ENCODE measurements at regions of chr11 and their contacts with region 1.

Region 1: DNA sequence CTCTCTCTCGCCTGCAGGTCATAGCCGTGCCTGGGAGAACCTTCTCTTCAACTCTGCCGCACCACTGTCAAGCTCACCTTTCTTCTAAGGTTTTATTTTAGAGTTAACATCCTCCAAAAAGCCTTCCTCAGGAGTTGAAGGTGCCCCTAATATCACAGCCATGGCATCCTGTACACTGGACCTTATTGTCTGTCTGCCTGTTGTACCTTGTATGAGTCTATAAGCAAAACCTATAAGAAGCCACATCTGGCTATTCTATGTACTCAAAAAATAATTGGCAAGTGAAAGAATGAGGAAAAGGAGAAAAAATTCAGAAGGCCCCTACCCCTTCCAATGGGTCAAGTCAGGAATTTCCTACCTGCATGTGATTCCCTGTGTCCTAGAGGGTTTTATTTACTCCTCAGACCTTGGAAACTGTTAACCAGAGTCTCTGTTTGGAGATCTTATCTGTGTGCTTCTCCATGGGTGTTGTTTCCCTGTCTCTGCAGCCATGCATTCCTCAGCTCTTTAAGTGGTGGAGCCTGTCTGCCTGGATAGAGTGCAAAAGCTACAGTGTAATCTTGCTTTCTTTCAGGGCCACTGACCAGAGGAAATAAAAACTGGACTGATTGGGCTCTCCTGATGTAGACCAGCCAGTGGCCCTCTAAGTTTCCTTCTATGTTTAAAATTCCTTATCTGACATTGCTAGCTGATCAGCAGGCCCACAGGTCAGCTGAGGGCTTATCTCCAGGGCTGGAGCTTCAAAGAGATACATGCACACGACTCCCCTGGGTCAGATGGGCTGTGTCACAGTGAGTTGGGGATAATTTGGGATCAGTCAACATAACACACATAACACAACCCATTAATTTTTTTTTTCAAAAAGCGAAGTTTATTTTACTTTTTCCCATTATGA is 37.6 kb upstream of the TMEM135 start:
- DNase-seq: peak; percentile 99
- ATAC-seq: peak; percentile 92
- H3K4me3 ChIP-seq: peak overlapping the region; percentile 31 to 48 (median 34)
- H3K27ac ChIP-seq: peak overlapping the region; percentile 87
- H3K4me1 ChIP-seq: peaks cover 91% of the 10 kb centered on the region
- H3K27me3 ChIP-seq: no peaks in the 10 kb centered on the region
- CTCF ChIP-seq: no peak
- EP300 ChIP-seq: peak; percentile 47 to 80; a peak in 2 of 4 replicates
- POLR2A ChIP-seq: peak in 1 of 2 experiments; percentile 42; a peak in 1 of 4 replicates
- RAD21 ChIP-seq: no peak

Region 2: GRCh38 chr11:86955361-86956120 is 44.6 kb before region 1 on chr11 and contains the start of gene FZD4:
- CTCF ChIA-PET with region 1: no interaction called
- POLR2A ChIA-PET with region 1: interaction called, 30 read pairs
- in situ Hi-C with region 1: loop called (anchors 5 kb)
- intact Hi-C with region 1: loop called (anchors 1 kb)
- DNase-seq: peak; percentile 88
- ATAC-seq: peak; percentile 92
- H3K4me3 ChIP-seq: peak within 1 kb of the TSS; percentile 79 to 87 (median 82)
- H3K27ac ChIP-seq: peak within 1 kb of the TSS; percentile 96
- H3K4me1 ChIP-seq: peaks cover 50% of the 10 kb centered on the region
- H3K27me3 ChIP-seq: no peaks in the 10 kb centered on the region; a peak in 1 of 5 replicates
- CTCF ChIP-seq: peak; percentile 71
- EP300 ChIP-seq: peak in 1 of 2 experiments; percentile 23; a peak in 1 of 4 replicates
- POLR2A ChIP-seq: peak; percentile 67 to 68
- RAD21 ChIP-seq: peak; percentile 78; the same call in 1 of the 2 replicates
- total RNA-seq, gene FZD4: 34.7 and 46.5 TPM in 2 replicates

Region 3: DNA sequence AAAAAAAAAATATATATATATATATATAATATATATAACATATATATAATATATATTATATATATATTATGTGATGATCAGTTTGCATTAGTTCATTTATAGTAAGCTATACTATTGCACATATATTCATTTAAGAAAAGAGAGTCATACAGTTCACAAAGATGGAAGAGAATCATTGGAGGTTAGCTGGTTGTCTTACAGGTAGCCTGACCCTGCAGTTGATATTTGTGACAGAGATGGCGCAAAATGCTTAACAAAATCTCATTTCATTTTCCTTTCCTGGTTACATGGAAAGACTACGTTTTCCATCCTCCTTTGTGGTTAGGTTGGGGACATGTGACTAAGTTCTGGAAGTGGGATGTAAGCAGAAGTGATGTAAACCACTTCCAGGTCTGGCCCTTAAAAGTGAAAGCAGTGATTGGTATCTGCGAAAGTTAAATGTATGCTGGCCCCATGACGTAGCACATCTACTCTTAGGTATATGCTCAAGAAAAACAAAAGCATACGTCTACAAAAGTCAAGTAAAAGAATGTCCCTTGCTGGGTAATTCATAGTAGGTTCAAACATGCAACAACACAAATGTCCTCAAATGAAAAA is 30.4 kb after region 1 on chr11:
- CTCF ChIA-PET with region 1: no interaction called
- POLR2A ChIA-PET with region 1: interaction called, 47 read pairs
- in situ Hi-C with region 1: loop called (anchors 5 kb)
- intact Hi-C with region 1: loop called (anchors 1 kb)
- DNase-seq: peak; percentile 29
- ATAC-seq: no peak
- H3K4me3 ChIP-seq: no peak overlapping the region
- H3K27ac ChIP-seq: no peak overlapping the region
- H3K4me1 ChIP-seq: peaks cover 53% of the 10 kb centered on the region
- H3K27me3 ChIP-seq: no peaks in the 10 kb centered on the region
- CTCF ChIP-seq: no peak
- EP300 ChIP-seq: no peak
- POLR2A ChIP-seq: no peak
- RAD21 ChIP-seq: no peak

Measured in HepG2 (cell line).